Endothelial cell of umbilical vein (primary cell): ENCODE measurements at regions of chr22 and their contacts with region 1.

Region 1: DNA sequence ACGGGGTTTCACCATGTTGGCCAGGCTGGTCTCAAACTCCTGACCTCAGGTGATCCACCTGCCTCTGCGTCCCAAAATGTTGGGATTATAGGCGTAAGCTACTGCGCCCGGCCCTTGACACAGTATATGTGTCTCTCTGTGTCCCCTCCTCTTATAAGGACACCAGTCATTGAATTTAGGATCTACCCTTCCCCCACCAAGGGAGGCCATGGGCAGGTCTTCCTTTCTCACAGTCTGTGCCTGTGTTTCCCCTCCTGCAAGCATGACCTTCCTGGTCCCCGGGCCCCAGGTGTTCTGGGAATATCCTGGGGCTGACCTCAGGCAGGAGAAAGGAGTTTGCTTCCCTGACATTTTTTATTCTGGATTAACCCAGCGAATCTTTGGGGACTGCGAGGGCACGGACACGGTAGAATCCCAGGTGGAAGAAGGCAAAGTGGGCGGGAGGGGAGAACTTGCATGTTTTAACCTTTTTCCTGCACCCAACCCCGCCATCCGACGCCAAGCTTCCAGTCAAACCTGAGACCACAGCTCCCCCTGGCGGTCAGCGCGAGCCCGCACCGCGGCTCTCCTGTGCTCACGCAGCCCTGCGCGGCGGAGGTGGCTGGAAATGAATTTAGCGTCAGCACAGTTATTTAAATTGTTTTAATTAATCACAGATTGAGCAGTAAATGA is 42.1 kb upstream of the ISX start:
- DNase-seq: no peak
- H3K4me3 ChIP-seq: no peak overlapping the region
- H3K27ac ChIP-seq: no peak overlapping the region
- H3K4me1 ChIP-seq: no peaks in the 10 kb centered on the region
- H3K27me3 ChIP-seq: no peaks in the 10 kb centered on the region
- CTCF ChIP-seq: peak; percentile 76 to 81
- POLR2A ChIP-seq: no peak

Region 2: GRCh38 chr22:33302049-33302545 is 1721.7 kb before region 1 on chr22:
- CTCF ChIA-PET with region 1: interaction called, 6 read pairs
- POLR2A ChIA-PET with region 1: no interaction called
- dilution Hi-C with region 1: no loop called
- intact Hi-C with region 1: loop called (anchors 5 kb)
- DNase-seq: peak; percentile 5
- H3K4me3 ChIP-seq: no peak overlapping the region
- H3K27ac ChIP-seq: no peak overlapping the region
- H3K4me1 ChIP-seq: no peaks in the 10 kb centered on the region
- H3K27me3 ChIP-seq: no peaks in the 10 kb centered on the region
- CTCF ChIP-seq: peak; percentile 68 to 74
- POLR2A ChIP-seq: no peak

Region 3: GRCh38 chr22:33519071-33519973 is 1504.5 kb before region 1 on chr22:
- CTCF ChIA-PET with region 1: no interaction called
- POLR2A ChIA-PET with region 1: no interaction called
- dilution Hi-C with region 1: no loop called
- intact Hi-C with region 1: loop called (anchors 5 kb)
- DNase-seq: no peak
- H3K4me3 ChIP-seq: no peak overlapping the region
- H3K27ac ChIP-seq: no peak overlapping the region
- H3K4me1 ChIP-seq: no peaks in the 10 kb centered on the region
- H3K27me3 ChIP-seq: no peaks in the 10 kb centered on the region
- CTCF ChIP-seq: peak in 1 of 2 donors; percentile 8
- POLR2A ChIP-seq: no peak

Region 4: DNA sequence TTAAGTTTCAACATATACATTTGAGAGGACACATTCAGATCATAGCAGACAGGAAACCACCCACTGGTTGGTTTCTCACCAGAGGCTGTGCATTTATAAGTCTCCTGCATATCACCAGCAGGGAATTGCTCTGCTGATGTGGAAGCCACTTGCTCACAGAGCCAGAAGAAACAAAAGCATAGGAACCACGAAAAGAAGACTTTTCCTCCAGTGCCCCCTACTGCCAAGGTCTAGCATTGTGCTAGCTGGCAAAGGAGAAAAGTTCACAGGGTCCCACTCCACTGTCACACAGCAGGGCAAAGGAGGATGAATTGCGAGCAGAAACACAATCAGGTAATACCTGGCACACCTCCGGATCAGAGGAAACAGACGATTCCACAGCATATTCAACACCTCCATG is 13.3 kb after region 1 on chr22:
- CTCF ChIA-PET with region 1: no interaction called
- POLR2A ChIA-PET with region 1: no interaction called
- dilution Hi-C with region 1: no loop called
- intact Hi-C with region 1: no loop called
- DNase-seq: no peak
- H3K4me3 ChIP-seq: no peak overlapping the region
- H3K27ac ChIP-seq: no peak overlapping the region
- H3K4me1 ChIP-seq: no peaks in the 10 kb centered on the region
- H3K27me3 ChIP-seq: no peaks in the 10 kb centered on the region
- CTCF ChIP-seq: no peak
- POLR2A ChIP-seq: no peak

Region 5: DNA sequence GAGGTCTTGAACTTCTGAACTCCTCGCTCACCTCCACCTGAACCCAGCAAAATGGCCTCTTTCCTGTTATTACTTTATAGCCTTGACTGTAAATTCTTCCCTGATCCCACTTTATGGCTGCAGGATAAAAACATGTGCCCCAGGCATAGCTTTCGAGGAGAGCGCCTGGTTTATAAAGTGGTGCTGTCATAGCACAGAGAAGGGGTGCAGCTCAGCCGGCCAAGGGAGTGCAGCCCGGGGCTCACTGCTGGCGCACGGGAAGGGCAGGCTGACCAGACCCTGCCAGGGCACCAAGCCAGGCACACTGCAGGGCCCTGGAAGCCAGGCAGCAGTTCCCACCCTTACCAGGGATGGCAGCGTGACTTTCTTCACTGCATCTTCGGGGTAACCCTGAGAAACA is 93.0 kb after region 1 on chr22:
- CTCF ChIA-PET with region 1: no interaction called
- POLR2A ChIA-PET with region 1: no interaction called
- dilution Hi-C with region 1: no loop called
- intact Hi-C with region 1: no loop called
- DNase-seq: no peak
- H3K4me3 ChIP-seq: no peak overlapping the region
- H3K27ac ChIP-seq: no peak overlapping the region
- H3K4me1 ChIP-seq: no peaks in the 10 kb centered on the region
- H3K27me3 ChIP-seq: no peaks in the 10 kb centered on the region
- CTCF ChIP-seq: no peak
- POLR2A ChIP-seq: no peak

Region 6: DNA sequence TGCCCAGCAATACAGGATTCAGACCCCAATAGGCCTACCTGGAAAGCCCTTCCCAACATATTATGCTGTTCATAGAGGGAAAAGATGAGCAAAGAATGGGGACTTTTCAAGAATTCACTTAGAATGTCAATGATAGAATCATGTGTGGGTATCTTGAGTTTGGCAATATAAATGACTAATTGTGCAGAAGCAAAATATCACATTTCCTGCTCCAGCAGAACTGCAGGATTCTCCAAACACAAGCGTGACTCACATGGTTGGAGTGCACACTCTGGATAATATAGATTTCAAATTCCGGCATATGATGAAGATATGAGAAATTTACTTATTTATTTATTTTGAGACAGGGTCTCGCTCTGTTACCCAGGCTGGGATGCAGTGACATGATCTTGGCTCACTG is 681.3 kb after region 1 on chr22:
- CTCF ChIA-PET with region 1: no interaction called
- POLR2A ChIA-PET with region 1: no interaction called
- dilution Hi-C with region 1: no loop called
- intact Hi-C with region 1: no loop called
- DNase-seq: peak; percentile 69
- H3K4me3 ChIP-seq: no peak overlapping the region
- H3K27ac ChIP-seq: no peak overlapping the region
- H3K4me1 ChIP-seq: peaks cover 5% of the 10 kb centered on the region
- H3K27me3 ChIP-seq: peaks cover 0 to 4% of the 10 kb centered on the region in 2 experiments
- CTCF ChIP-seq: no peak
- POLR2A ChIP-seq: no peak